WTC11 (cell line): ENCODE measurements at regions of chr14 and their contacts with region 1.

Region 1: GRCh38 chr14:22570132-22570949 is 18.7 kb downstream of the DAD1 start:
- DNase-seq: peak; percentile 84
- ATAC-seq: peak; percentile 99
- H3K4me3 Mint-ChIP-seq: no peak overlapping the region
- H3K27ac Mint-ChIP-seq: peak overlapping the region; percentile 99
- H3K4me1 Mint-ChIP-seq: peaks cover 17% of the 10 kb centered on the region
- H3K27me3 Mint-ChIP-seq: no peaks in the 10 kb centered on the region
- CTCF ChIP-seq: peak; percentile 93

Region 2: DNA sequence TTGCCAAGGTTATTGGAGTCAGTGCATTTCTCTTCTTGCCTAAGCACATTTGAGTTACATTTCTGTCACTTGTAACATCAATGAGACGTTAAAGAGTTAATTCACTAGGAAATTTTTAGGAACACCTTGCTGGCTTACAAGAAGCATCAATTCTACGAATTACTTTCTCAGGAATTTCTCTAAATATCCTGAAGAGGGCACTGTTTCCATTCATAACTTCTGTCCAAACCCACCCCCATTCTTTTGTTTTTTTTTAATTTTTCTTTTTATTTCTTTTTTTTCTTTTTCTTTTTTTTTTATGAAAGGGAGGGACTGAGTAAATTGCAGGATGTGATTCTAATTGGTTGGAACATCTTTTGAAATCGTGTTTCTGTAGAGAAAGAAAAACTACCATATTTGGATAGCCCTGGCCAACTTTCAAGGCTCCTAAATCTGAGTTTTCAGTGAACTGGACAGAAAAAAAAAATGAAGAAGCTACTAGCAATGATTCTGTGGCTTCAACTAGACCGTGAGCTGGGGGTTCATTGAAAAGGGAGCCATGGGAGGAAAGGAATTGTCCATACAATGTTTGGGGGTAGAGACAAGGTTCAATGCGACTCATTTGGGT is 266.6 kb before region 1 on chr14:
- CTCF ChIA-PET with region 1: no interaction called
- POLR2A ChIA-PET with region 1: no interaction called
- DNase-seq: no peak
- ATAC-seq: no peak
- H3K4me3 Mint-ChIP-seq: no peak overlapping the region
- H3K27ac Mint-ChIP-seq: no peak overlapping the region
- H3K4me1 Mint-ChIP-seq: no peaks in the 10 kb centered on the region
- H3K27me3 Mint-ChIP-seq: no peaks in the 10 kb centered on the region; the same call in 1 of the 2 replicates
- CTCF ChIP-seq: no peak; the same call in 1 of the 2 replicates

Region 3: GRCh38 chr14:22478670-22479069 is 91.7 kb before region 1 on chr14:
- CTCF ChIA-PET with region 1: interaction called, 13 read pairs
- POLR2A ChIA-PET with region 1: no interaction called
- DNase-seq: no peak
- ATAC-seq: no peak
- H3K4me3 Mint-ChIP-seq: no peak overlapping the region
- H3K27ac Mint-ChIP-seq: no peak overlapping the region
- H3K4me1 Mint-ChIP-seq: peaks cover 67% of the 10 kb centered on the region
- H3K27me3 Mint-ChIP-seq: no peaks in the 10 kb centered on the region
- CTCF ChIP-seq: no peak

Region 4: GRCh38 chr14:22556990-22557623 is 13.2 kb before region 1 on chr14:
- CTCF ChIA-PET with region 1: interaction called, 111 read pairs
- POLR2A ChIA-PET with region 1: interaction called, 4 read pairs
- DNase-seq: peak; percentile 94
- ATAC-seq: peak; percentile 78
- H3K4me3 Mint-ChIP-seq: peak overlapping the region; percentile 53
- H3K27ac Mint-ChIP-seq: 0 out of 2 replicates have a peak overlapping the region, but pooled peaks have one; percentile 49
- H3K4me1 Mint-ChIP-seq: peaks cover 46% of the 10 kb centered on the region
- H3K27me3 Mint-ChIP-seq: no peaks in the 10 kb centered on the region
- CTCF ChIP-seq: peak; percentile 100

Region 5: GRCh38 chr14:22614224-22614799 is 44.0 kb after region 1 on chr14:
- CTCF ChIA-PET with region 1: interaction called, 22 read pairs
- POLR2A ChIA-PET with region 1: interaction called, 3 read pairs
- DNase-seq: no peak
- ATAC-seq: peak; percentile 75
- H3K4me3 Mint-ChIP-seq: no peak overlapping the region
- H3K27ac Mint-ChIP-seq: 0 out of 2 replicates have a peak overlapping the region, but pooled peaks have one; percentile 37
- H3K4me1 Mint-ChIP-seq: peaks cover 11% of the 10 kb centered on the region
- H3K27me3 Mint-ChIP-seq: peaks cover 9% of the 10 kb centered on the region
- CTCF ChIP-seq: no peak

Region 6: GRCh38 chr14:22766456-22767322 is 196.3 kb after region 1 on chr14 and contains the start of gene OXA1L:
- CTCF ChIA-PET with region 1: interaction called, 41 read pairs
- POLR2A ChIA-PET with region 1: no interaction called
- DNase-seq: peak; percentile 91
- ATAC-seq: peak; percentile 89
- H3K4me3 Mint-ChIP-seq: peak within 1 kb of the TSS; percentile 93
- H3K27ac Mint-ChIP-seq: peak within 1 kb of the TSS; percentile 97
- H3K4me1 Mint-ChIP-seq: peaks cover 26% of the 10 kb centered on the region
- H3K27me3 Mint-ChIP-seq: no peaks in the 10 kb centered on the region
- CTCF ChIP-seq: no peak
- total RNA-seq, gene OXA1L: 133 to 138 TPM (median 135 TPM) in 3 replicates

Region 7: DNA sequence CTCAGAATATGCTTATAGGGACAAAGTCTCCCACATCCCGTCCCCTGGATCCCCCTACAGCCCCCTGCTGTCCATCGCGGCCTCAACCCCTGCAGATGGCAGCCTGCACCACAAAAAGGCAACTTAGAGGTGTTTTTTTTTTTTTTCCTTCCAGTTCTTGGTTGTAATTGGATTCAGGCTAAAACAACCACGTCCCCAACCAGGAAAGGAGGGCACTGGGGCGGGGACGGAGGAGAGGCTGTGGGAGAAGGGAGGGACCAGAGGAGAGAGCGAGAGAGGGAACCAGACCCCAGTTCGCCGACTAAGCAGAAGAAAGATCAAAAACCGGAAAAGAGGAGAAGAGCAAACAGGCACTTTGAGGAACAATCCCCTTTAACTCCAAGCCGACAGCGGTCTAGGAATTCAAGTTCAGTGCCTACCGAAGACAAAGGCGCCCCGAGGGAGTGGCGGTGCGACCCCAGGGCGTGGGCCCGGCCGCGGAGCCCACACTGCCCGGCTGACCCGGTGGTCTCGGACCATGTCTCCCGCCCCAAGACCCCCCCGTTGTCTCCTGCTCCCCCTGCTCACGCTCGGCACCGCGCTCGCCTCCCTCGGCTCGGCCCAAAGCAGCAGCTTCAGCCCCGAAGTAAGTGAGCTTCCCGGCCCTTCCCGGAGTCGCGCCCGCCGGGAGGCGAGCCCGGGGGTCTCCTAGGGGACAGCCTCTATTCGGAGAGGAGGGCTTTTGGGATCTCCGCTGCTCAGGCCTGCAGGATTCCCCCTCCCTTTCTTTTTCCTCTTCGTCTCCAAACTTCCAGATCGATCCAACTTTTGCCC is 266.2 kb after region 1 on chr14 and contains the start of gene MMP14:
- CTCF ChIA-PET with region 1: interaction called, 15 read pairs
- POLR2A ChIA-PET with region 1: no interaction called
- DNase-seq: peak; percentile 62
- ATAC-seq: peak; percentile 66
- H3K4me3 Mint-ChIP-seq: peak within 1 kb of the TSS; percentile 100
- H3K27ac Mint-ChIP-seq: peak within 1 kb of the TSS; percentile 98
- H3K4me1 Mint-ChIP-seq: peaks cover 29% of the 10 kb centered on the region
- H3K27me3 Mint-ChIP-seq: no peaks in the 10 kb centered on the region; the same call in 1 of the 2 replicates
- CTCF ChIP-seq: no peak
- total RNA-seq, gene MMP14: 81.6 to 94.4 TPM (median 83.9 TPM) in 3 replicates

Region 8: DNA sequence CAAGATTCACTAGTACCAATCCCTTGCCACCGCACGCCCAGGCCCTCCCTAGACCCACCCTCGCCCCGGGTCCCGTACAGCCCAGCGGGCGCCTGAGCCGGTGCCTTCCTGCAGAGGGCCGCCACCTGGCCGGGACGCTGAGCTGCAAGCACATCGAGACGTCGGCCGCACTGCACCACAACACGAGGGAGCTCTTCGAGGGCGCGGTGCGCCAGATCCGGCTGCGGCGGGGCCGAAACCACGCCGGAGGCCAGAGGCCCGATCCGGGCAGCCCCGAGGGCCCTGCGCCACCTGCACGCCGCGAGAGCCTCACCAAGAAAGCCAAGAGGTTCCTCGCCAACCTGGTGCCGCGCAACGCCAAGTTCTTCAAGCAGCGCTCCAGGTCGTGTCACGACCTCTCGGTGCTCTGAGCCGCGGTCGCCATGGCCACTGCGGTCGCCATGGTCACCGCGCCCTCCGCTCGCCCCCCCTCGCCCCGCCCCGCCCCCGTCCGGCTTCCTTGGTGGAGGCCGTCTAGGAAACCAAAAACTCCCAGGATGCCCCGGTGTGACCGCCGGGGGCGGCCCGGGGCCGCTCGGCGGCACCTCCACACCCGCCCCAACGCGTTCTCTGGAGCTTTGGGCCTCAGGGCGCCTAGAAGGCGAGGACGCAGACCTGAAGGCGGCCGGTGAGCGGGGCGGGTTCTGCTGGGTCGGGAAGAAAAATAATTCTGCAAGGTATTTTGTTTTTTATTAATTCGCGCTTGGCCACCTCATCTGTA is 316.3 kb after region 1 on chr14:
- CTCF ChIA-PET with region 1: interaction called, 12 read pairs
- POLR2A ChIA-PET with region 1: no interaction called
- DNase-seq: peak; percentile 80
- ATAC-seq: peak; percentile 46
- H3K4me3 Mint-ChIP-seq: peak overlapping the region; percentile 88
- H3K27ac Mint-ChIP-seq: peak overlapping the region; percentile 97
- H3K4me1 Mint-ChIP-seq: peaks cover 41% of the 10 kb centered on the region
- H3K27me3 Mint-ChIP-seq: peaks cover 30% of the 10 kb centered on the region
- CTCF ChIP-seq: no peak